ENCODE measurements at regions of chr1 and their contacts with region 1.

Region 1: GRCh38 chr1:2108213-2108876 is 58.1 kb downstream of the PRKCZ start:
- DNase-seq: peak; percentile 21
- ATAC-seq: peak; percentile 87
- H3K4me3 ChIP-seq: no peak overlapping the region
- H3K27ac ChIP-seq: no peak overlapping the region
- H3K4me1 ChIP-seq: no peaks in the 10 kb centered on the region
- H3K27me3 ChIP-seq: no peaks in the 10 kb centered on the region
- CTCF ChIP-seq: peak; percentile 32 to 54 (median 51); a peak in 5 of 6 replicates
- POLR2A ChIP-seq: no peak
- RAD21 ChIP-seq: no peak; the same call in 1 of the 2 replicates

Region 2: GRCh38 chr1:2073382-2074230 is 34.7 kb before region 1 on chr1:
- CTCF ChIA-PET with region 1: no interaction called
- POLR2A ChIA-PET with region 1: no interaction called
- RAD21 ChIA-PET with region 1: no interaction called
- intact Hi-C with region 1: no loop called
- DNase-seq: no peak
- ATAC-seq: no peak
- H3K4me3 ChIP-seq: no peak overlapping the region
- H3K27ac ChIP-seq: no peak overlapping the region
- H3K4me1 ChIP-seq: no peaks in the 10 kb centered on the region
- H3K27me3 ChIP-seq: no peaks in the 10 kb centered on the region
- CTCF ChIP-seq: no peak
- POLR2A ChIP-seq: no peak
- RAD21 ChIP-seq: no peak

Region 3: DNA sequence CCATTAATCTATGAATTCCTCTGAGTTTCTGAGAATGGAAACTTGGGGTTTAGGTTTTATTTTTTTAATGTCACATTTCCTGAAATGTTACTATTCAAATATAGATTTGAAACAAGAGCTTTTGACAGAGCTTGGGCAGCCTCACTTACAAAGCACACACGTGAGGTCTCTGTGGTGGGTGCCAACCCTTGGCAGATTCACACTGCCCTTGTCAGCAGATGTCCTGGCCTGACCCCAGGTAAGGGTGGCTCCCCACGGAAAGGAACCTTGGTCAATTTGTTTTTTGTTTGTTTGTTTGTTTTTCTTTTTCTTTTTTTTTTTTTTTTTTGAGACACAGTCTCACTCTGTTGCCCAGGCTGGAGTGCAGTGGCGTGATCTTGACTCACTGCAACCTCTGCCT is 32.7 kb after region 1 on chr1:
- CTCF ChIA-PET with region 1: interaction called, 12 read pairs
- POLR2A ChIA-PET with region 1: no interaction called
- RAD21 ChIA-PET with region 1: interaction called in 1 of 2 experiments, 5 read pairs
- intact Hi-C with region 1: no loop called
- DNase-seq: no peak
- ATAC-seq: no peak
- H3K4me3 ChIP-seq: no peak overlapping the region
- H3K27ac ChIP-seq: peak overlapping the region; percentile 84
- H3K4me1 ChIP-seq: peaks cover 18 to 32% of the 10 kb centered on the region in 2 experiments
- H3K27me3 ChIP-seq: no peaks in the 10 kb centered on the region
- CTCF ChIP-seq: no peak
- POLR2A ChIP-seq: no peak
- RAD21 ChIP-seq: no peak